ENCODE measurements at regions of chr17 and their contacts with region 1.

Region 1: DNA sequence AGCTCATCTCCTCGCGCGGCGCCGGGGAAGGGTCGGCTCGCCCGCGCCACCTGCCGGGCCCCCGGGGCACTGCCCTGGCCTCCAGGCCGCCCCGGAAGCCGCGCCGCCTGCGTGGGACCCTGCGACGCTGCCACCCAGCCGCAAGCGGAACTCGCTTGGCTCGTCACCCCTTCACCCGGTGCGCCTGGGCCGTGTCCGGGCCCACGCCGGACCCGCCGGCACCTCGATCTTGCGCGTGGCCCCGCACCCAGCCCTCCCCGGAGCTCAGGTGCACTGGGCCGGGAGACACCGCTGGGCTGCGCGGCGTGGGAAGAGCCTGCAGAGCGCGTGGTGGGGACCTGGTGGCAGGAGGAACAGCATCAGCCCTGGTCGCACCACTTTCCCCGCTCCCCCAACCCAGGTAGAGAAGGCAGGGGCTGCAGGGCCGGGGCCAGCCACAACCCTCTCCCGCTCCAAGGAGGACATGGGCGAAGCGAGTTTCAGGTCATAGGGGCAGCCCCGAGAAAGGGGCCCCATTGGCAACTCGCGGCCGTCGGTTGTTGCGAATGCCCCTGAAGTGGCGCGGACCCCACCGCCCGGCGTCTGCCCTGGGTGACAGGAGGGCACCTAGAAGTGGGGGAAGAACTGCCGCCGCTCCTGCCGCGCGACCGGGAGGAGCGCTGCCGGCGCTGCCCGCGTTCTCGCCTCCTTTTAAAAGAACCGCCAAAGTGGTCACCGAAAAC is 363 bp upstream of the MIF4GD start:
- DNase-seq: peak; percentile 90
- H3K4me3 Mint-ChIP-seq: peak overlapping the region; percentile 92
- H3K27ac Mint-ChIP-seq: peak overlapping the region; percentile 86
- H3K4me1 Mint-ChIP-seq: peaks cover 36% of the 10 kb centered on the region
- H3K27me3 Mint-ChIP-seq: no peaks in the 10 kb centered on the region

Region 2: GRCh38 chr17:75182569-75183450 is 88.6 kb before region 1 on chr17 and contains the start of gene SUMO2:
- intact Hi-C with region 1: loop called (anchors 1 kb)
- DNase-seq: peak; percentile 93
- H3K4me3 Mint-ChIP-seq: peak within 1 kb of the TSS; percentile 99
- H3K27ac Mint-ChIP-seq: peak within 1 kb of the TSS; percentile 98
- H3K4me1 Mint-ChIP-seq: peaks cover 38% of the 10 kb centered on the region
- H3K27me3 Mint-ChIP-seq: no peaks in the 10 kb centered on the region
- total RNA-seq, gene SUMO2: 649 and 656 TPM in 2 replicates

Region 3: DNA sequence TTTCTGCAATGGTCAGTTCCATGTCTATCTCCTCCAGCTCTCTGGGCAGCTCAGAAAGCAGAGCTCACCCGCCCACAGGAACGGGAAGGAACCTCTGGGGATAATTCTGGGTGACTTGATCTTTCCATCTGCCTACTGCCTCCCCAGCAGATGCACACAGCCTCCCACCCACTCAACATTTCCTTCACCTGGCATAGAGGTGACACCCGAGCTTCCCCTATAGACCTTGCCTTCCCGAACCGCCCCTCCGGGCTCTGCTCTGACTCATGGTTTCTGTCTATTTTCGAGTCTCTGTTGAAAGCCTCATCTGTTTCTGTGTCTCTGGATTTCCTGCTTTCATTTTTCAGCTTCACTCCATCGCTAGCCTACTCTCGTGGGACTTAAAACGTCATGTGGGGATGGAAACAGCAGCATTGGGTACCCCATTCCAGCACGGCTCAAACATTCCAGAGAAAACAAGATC is 21.4 kb before region 1 on chr17:
- intact Hi-C with region 1: loop called (anchors 1 kb)
- DNase-seq: peak; percentile 64
- H3K4me3 Mint-ChIP-seq: peak overlapping the region; percentile 77
- H3K27ac Mint-ChIP-seq: peak overlapping the region; percentile 92
- H3K4me1 Mint-ChIP-seq: peaks cover 63% of the 10 kb centered on the region
- H3K27me3 Mint-ChIP-seq: no peaks in the 10 kb centered on the region

Region 4: GRCh38 chr17:75412455-75413317 is 141.3 kb after region 1 on chr17:
- intact Hi-C with region 1: loop called (anchors 1 kb)
- DNase-seq: peak; percentile 69
- H3K4me3 Mint-ChIP-seq: no peak overlapping the region
- H3K27ac Mint-ChIP-seq: no peak overlapping the region
- H3K4me1 Mint-ChIP-seq: peaks cover 29% of the 10 kb centered on the region
- H3K27me3 Mint-ChIP-seq: peaks cover 10% of the 10 kb centered on the region